ENCODE measurements at regions of chr6 and their contacts with region 1.

Region 1: DNA sequence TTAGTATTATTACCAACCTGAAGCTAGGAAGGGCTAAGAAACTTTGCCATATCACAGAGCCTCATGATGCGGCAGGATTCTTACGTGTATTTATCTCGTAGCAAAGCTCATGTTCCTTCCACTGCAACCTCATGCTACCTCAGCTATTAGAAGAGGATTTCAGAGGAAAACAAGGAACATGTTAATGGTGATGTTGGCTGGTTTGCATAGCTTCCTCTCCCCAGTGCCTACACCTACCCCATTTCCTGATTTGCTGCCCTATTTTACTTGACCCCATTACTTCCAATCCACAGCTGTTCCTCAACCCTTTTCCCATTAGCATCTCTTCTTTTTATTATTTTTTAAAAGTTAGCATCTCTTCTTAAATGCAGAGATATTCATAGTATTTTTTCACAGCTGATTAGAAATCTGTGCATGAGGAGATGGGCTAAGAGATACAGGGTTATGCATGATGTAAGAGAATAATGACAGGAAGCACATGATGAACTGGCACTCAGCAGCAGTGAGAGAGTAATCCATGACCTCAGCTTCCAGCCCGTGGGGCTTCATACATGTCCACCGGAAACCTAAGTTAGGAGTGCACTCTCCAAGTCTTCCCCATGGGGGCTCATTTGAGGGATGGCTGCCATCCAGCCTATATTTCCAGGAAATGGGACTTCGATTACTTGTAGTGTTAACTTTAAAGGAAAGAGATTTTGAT is 106.1 kb upstream of the ASF1A start:
- DNase-seq: no peak
- ATAC-seq: no peak
- H3K4me3 ChIP-seq: no peak overlapping the region
- H3K27ac ChIP-seq: no peak overlapping the region
- H3K4me1 ChIP-seq: no peaks in the 10 kb centered on the region
- H3K27me3 ChIP-seq: no peaks in the 10 kb centered on the region
- CTCF ChIP-seq: no peak
- EP300 ChIP-seq: no peak
- POLR2A ChIP-seq: no peak
- RAD21 ChIP-seq: no peak

Region 2: DNA sequence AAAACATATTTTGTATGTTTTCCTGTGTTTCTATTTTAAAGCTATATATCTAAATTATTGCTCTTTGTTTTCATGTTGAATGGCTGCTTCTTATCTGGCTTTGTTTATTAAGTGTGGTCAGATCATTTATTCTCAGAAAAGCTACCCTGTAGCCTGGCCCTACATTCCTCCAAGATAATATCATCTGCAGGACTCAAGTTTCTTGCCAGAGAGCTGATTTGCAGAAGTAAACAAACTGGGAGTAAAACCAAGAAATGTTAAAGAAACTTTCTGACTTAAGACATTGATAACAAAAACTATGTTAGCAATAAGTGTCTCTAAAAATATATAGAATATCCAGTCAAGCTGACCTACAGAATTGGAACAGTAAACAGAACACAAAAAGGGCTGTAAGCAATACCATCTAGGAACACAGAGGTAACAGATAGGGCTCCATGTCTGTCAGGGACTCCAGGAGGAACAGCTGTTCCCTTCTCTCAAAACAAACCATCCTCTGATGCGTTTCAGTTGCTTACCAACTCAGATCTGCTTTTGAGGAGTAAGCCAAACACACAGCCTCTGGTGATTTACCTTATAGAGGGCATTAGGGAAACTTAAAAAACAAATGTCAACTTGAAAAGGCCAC is 119.0 kb before region 1 on chr6:
- CTCF ChIA-PET with region 1: no interaction called
- POLR2A ChIA-PET with region 1: no interaction called
- RAD21 ChIA-PET with region 1: no interaction called
- SMC1A ChIA-PET with region 1: no interaction called
- in situ Hi-C with region 1: no loop called
- intact Hi-C with region 1: no loop called
- DNase-seq: no peak
- ATAC-seq: no peak
- H3K4me3 ChIP-seq: no peak overlapping the region
- H3K27ac ChIP-seq: no peak overlapping the region
- H3K4me1 ChIP-seq: peaks cover 3% of the 10 kb centered on the region; the same call in 1 of the 2 replicates
- H3K27me3 ChIP-seq: no peaks in the 10 kb centered on the region
- CTCF ChIP-seq: no peak
- EP300 ChIP-seq: no peak
- POLR2A ChIP-seq: no peak
- RAD21 ChIP-seq: no peak

Region 3: DNA sequence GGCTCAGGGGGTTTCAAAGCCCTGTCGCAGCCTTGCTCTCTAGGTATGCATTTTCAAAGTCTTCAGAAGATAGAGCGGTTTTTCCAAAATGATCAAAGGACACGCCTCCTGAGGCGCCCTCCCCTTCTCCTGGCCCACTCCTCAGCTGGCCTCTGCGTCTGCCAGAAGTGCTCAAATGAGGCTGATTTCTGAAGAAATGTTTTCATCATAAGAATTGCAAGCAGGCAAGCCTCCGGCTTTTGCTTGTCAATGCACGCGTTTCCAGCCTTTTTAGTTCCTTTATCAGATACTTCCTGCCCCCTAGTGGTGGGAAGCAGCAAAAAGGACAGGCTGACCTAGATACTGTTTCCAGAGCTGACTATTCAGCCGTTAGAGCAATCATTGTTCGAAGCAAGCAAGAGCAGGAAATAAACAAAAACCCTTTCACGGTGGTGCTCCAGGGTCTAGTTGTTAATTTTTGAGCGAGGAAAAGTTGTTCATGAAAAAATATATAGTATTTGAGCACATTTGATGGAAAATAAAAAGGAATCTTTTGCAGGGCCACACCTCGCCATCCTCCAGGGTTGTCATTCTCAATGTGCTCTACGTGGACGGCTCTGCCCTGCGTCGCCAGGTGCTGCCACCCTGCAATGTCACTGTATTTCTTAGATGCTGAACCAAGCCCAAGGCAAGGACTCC is 12.7 kb after region 1 on chr6:
- CTCF ChIA-PET with region 1: interaction called, 19 read pairs
- POLR2A ChIA-PET with region 1: no interaction called
- RAD21 ChIA-PET with region 1: no interaction called
- SMC1A ChIA-PET with region 1: interaction called, 5 read pairs
- in situ Hi-C with region 1: no loop called
- intact Hi-C with region 1: no loop called
- DNase-seq: peak; percentile 25
- ATAC-seq: peak; percentile 98
- H3K4me3 ChIP-seq: no peak overlapping the region
- H3K27ac ChIP-seq: no peak overlapping the region
- H3K4me1 ChIP-seq: no peaks in the 10 kb centered on the region
- H3K27me3 ChIP-seq: no peaks in the 10 kb centered on the region
- CTCF ChIP-seq: peak; percentile 81 to 96 (median 82)
- EP300 ChIP-seq: no peak
- POLR2A ChIP-seq: no peak
- RAD21 ChIP-seq: peak; percentile 80

Region 4: DNA sequence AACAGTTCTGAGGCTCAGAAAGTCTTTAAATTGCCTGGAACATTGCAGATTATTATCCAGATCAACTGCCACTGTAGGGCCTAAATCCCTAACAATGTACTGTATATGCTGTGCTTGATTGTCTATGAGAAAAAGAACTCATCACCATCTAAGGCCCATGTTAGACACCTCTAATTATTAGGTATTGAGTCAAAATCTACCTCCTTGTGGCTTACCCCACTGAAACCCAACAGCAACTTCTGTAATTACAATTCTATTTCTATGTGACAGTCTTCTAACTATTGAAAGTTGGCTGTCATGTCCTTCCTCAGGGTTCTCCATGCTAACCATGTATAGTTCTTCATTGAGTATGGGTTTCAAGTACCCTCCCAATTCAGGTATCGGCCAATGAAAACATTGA is 133.2 kb after region 1 on chr6:
- CTCF ChIA-PET with region 1: no interaction called
- POLR2A ChIA-PET with region 1: no interaction called
- RAD21 ChIA-PET with region 1: no interaction called
- SMC1A ChIA-PET with region 1: no interaction called
- in situ Hi-C with region 1: no loop called
- intact Hi-C with region 1: no loop called
- DNase-seq: no peak
- ATAC-seq: peak; percentile 69
- H3K4me3 ChIP-seq: no peak overlapping the region
- H3K27ac ChIP-seq: no peak overlapping the region
- H3K4me1 ChIP-seq: no peaks in the 10 kb centered on the region
- H3K27me3 ChIP-seq: no peaks in the 10 kb centered on the region
- CTCF ChIP-seq: no peak
- EP300 ChIP-seq: no peak
- POLR2A ChIP-seq: no peak
- RAD21 ChIP-seq: no peak

Measured in GM12878 (cell line).